Lower leg skin (tissue), 4 donors: ENCODE measurements at regions of chr3 and their contacts with region 1.

Region 1: GRCh38 chr3:135412480-135412879 is 553.0 kb upstream of the PPP2R3A start:
- DNase-seq: no peak
- H3K4me3 ChIP-seq: no peak overlapping the region
- CTCF ChIP-seq: no peak
- POLR2A ChIP-seq: no peak

Region 2: GRCh38 chr3:133578548-133579191 is 1833.8 kb before region 1 on chr3:
- intact Hi-C with region 1: loop called (anchors 5 kb)
- DNase-seq: no peak
- H3K4me3 ChIP-seq: no peak overlapping the region
- CTCF ChIP-seq: no peak
- POLR2A ChIP-seq: no peak